H1 (cell line): ENCODE measurements at regions of chr19 and their contacts with region 1.

Region 1: DNA sequence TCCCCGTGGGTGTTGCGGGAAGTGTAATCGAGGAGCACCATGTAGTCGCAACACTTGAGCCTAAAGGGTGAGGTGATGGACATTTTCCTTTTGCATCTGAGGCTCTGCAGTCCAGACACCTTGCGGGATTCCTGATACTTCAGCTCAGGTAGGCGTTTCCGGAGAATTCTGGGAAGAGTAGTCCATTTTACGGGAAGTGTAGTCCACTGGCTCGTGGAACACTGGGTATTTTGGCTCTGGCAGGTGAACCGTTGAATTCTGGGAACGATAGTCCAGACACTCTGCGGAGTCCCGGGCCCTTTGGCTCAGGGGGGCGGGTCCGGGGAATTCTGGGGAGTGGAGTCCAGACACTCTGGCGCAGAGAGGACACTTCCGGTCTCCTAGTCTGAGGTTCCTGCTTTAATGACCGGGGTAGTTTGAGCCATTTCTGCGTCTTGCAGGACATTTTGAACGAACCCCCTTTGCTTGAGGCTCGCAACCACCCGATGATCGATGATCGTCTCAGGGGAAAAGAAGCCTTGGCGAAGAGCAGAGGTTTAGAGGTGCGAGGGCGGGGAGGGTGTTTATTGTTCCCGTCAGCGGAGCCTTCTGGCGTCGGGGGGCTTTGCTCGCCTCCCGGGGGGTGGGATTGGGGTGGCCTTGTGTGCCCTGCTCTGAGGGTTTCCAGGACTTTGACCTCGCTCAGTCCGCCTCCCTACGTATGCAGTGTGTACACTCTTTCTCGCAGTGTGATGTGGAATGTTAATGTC is at the start of gene ZNF223:
- DNase-seq: peak; percentile 77 to 89
- H3K4me3 ChIP-seq: peak within 1 kb of the TSS; percentile 59 to 85 (median 72)
- H3K27ac ChIP-seq: no peak within 1 kb of the TSS
- H3K4me1 ChIP-seq: peaks cover 0 to 2% (median 0%) of the 10 kb centered on the region in 4 experiments; a peak in 1 of 7 replicates
- H3K27me3 ChIP-seq: no peaks in the 10 kb centered on the region
- CTCF ChIP-seq: no peak
- EP300 ChIP-seq: no peak
- POLR2A ChIP-seq: peak in 1 of 2 experiments; percentile 60; a peak in 1 of 3 replicates
- RAD21 ChIP-seq: no peak
- total RNA-seq, gene ZNF223: 3.9 and 4.3 TPM in 2 replicates

Region 2: GRCh38 chr19:43913383-43913782 is 138.4 kb before region 1 on chr19:
- CTCF ChIA-PET with region 1: no interaction called
- POLR2A ChIA-PET with region 1: no interaction called
- DNase-seq: no peak
- H3K4me3 ChIP-seq: no peak overlapping the region
- H3K27ac ChIP-seq: no peak overlapping the region
- H3K4me1 ChIP-seq: no peaks in the 10 kb centered on the region
- H3K27me3 ChIP-seq: no peaks in the 10 kb centered on the region; a peak in 1 of 7 replicates
- CTCF ChIP-seq: no peak
- EP300 ChIP-seq: no peak
- POLR2A ChIP-seq: no peak
- RAD21 ChIP-seq: no peak

Region 3: GRCh38 chr19:44025217-44025936 is 26.5 kb before region 1 on chr19 and contains the start of gene ZNF222:
- CTCF ChIA-PET with region 1: interaction called, 3 read pairs
- POLR2A ChIA-PET with region 1: interaction called, 11 read pairs
- DNase-seq: peak; percentile 25 to 75
- H3K4me3 ChIP-seq: peak within 1 kb of the TSS; percentile 71 to 95 (median 84)
- H3K27ac ChIP-seq: no peak within 1 kb of the TSS
- H3K4me1 ChIP-seq: no peaks in the 10 kb centered on the region
- H3K27me3 ChIP-seq: no peaks in the 10 kb centered on the region
- CTCF ChIP-seq: no peak
- EP300 ChIP-seq: no peak
- POLR2A ChIP-seq: peak in 1 of 2 experiments; percentile 67; a peak in 2 of 3 replicates
- RAD21 ChIP-seq: no peak; a peak in 1 of 4 replicates
- total RNA-seq, gene ZNF222: 3.4 and 3.8 TPM in 2 replicates

Region 4: DNA sequence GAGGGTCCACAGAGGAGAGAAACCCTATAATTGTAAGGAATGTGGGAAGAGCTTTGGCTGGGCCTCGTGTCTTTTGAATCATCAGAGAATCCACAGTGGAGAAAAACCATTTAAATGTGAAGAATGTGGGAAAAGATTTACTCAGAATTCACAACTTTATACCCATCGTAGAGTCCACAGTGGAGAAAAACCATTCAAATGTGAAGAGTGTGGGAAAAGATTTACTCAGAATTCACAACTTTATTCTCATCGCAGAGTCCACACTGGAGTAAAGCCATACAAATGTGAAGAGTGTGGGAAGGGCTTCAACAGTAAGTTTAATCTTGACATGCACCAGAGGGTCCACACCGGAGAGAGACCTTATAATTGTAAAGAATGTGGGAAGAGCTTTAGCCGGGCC is 80.1 kb after region 1 on chr19:
- CTCF ChIA-PET with region 1: no interaction called
- POLR2A ChIA-PET with region 1: no interaction called
- DNase-seq: no peak
- H3K4me3 ChIP-seq: no peak overlapping the region
- H3K27ac ChIP-seq: no peak overlapping the region
- H3K4me1 ChIP-seq: no peaks in the 10 kb centered on the region
- H3K27me3 ChIP-seq: no peaks in the 10 kb centered on the region
- CTCF ChIP-seq: no peak
- EP300 ChIP-seq: no peak
- POLR2A ChIP-seq: no peak
- RAD21 ChIP-seq: no peak

Region 5: GRCh38 chr19:44164673-44165512 is 113.1 kb after region 1 on chr19 and contains the start of gene ZNF226:
- CTCF ChIA-PET with region 1: no interaction called
- POLR2A ChIA-PET with region 1: no interaction called
- DNase-seq: peak; percentile 75 to 80
- H3K4me3 ChIP-seq: peak within 1 kb of the TSS; percentile 77 to 95 (median 84)
- H3K27ac ChIP-seq: peak within 1 kb of the TSS; percentile 84
- H3K4me1 ChIP-seq: peaks cover 0 to 5% (median 0%) of the 10 kb centered on the region in 4 experiments; a peak in 1 of 7 replicates
- H3K27me3 ChIP-seq: no peaks in the 10 kb centered on the region
- CTCF ChIP-seq: no peak
- EP300 ChIP-seq: no peak
- POLR2A ChIP-seq: peak; percentile 50 to 90
- RAD21 ChIP-seq: no peak
- total RNA-seq, gene ZNF226: 12.6 and 18.3 TPM in 2 replicates

Region 6: DNA sequence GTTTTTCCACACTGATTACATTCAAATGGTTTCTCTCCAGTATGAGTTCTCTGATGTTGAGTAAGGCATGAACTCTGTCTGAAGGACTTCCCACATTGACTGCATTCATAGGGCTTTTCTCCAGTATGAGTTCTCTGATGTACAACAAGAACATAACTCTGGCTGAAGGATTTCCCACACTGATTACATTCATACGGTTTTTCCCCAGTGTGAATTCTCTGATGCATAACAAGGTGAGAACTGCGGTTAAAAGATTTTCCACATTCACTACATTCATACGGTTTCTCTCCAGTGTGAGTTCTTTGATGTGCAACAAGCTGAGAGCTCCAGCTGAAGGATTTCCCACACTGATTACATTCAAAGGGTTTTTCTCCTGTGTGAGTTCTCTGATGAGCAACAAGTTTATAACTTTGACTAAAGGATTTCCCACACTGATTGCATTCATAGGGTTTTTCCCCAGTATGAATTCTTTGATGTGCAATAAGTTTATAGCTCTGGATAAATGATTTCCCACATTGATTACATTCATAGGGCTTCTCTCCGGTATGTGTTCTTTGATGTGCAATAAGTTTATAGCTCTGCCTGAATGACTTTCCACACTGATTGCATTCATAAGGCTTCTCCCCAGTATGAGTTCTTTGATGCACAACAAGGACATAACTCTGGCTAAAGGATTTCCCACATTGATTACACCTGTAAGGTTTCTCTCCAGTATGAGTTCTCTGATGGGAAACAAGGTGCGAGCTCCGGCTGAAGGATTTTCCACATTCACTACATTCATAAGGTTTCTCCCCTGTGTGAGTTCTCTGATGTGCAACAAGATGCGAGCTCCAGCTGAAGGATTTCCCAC is 425.0 kb after region 1 on chr19:
- CTCF ChIA-PET with region 1: no interaction called
- POLR2A ChIA-PET with region 1: no interaction called
- DNase-seq: no peak
- H3K4me3 ChIP-seq: peak overlapping the region in 1 of 4 experiments; percentile 44; a peak in 1 of 8 replicates
- H3K27ac ChIP-seq: no peak overlapping the region
- H3K4me1 ChIP-seq: no peaks in the 10 kb centered on the region
- H3K27me3 ChIP-seq: no peaks in the 10 kb centered on the region
- CTCF ChIP-seq: no peak
- EP300 ChIP-seq: no peak
- POLR2A ChIP-seq: no peak
- RAD21 ChIP-seq: no peak